ENCODE measurements at regions of chr5 and their contacts with region 1.

Region 1: DNA sequence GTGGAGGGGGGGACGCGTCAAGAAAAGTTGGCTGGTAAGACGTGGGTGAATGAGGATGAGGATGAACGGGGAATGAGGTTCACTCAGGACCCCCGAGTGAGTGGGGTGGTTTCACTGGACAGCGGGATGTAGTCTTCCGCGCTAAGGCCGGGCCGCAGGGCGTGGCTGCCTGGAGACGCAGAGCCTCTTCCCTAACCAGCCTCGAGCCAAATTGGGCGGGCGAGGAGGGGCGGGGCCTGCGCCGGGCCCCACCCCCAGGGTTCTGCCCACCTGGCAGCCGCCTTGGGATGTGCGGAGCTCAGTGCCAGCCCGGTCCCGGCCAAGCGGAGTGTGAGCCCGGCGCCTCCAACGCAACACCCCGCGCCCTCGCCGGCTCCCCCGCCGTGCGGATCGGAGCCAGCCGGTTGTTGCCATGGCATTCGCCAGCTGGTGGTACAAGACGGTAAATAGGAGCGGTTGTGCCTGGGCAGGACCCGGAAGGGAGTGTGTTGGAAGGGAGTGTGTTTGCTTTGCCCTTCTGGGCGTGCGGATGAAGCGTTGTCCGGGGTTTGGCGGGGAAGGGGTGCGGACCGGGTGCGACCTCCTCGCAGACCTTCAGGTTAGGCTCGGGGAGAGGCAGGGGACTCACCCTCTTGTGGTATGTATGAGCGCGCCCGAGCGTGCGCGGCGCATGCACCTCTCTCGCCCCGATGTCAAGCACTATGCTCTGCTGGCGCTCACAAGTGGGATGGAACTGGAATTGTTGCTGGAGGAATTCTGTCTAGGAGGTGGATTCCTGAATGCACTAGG is 743 bp downstream of the CAST start:
- DNase-seq: peak; percentile 98

Region 2: DNA sequence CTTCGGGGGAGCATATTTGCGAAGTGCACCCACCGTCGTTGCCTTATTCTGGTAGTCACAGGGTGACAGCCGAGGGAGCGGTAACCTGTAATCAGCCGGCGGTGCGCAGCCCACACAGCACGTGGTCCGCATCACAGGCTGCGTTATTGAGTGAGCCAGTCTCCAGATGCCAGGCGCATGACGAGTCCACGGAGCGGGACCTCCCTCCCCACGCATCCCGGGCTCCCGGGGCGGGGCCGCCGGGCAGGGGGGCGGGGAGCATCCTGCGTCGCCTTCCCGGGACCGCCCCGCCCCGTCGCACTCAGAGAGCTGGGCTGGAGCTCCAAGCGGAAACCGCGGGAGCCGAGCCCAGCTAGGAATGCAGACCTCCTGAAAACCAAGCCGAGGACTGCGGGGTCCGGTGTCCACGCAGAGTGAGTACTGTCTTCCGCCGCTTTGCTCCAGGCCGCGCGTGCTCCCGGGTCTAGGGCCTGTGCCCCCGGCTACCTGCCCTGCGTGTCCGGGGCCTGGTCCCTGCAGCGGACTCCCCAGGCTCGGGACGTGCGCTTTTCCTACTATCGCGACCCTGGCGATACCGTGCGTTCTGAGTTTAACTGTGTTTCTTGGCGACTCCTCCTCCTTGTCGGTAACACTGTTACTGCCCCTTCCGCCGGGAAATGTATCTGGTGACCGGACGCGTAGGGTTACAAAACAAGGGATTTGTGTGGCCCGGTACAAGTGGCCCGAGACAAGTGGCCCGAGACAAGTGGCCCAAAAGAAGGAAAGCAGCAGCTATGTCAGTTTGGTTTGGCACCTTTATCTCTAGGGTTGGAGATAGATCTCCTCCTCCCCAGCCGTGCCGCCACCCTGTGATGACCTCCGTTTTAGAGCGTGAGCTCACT is 39.8 kb after region 1 on chr5:
- intact Hi-C with region 1: loop called (anchors 1 kb)
- DNase-seq: peak; percentile 96

Region 3: DNA sequence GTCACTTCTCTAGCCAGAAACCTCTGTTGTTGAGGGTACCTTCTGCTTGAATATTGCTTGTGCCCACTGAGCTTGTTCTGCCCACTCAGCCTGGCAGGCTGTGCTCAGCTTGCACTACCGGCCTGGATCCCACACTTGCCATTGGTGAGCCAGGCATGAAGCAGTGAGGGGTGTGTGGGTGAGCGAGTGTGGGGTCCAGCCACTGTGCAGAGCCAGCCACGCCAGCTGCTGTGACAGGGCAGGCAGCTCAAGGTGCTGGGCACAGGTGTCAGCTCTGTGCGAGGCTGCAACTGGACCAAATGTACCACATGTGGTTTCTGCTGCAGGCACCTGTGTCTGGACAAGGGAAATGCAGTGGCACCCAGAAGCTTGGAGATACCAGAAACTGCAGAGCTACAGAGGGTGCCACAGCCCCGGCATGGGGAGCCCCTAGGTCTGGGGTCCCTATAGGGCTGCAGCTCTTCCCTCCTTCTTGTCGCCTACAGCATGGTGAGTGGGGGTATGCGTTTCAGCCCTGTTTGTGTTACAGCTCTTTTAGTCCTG is 825.3 kb after region 1 on chr5:
- intact Hi-C with region 1: no loop called
- DNase-seq: no peak

Measured in cardiac septum (tissue), 1 donor.